ENCODE measurements at regions of chr5 and their contacts with region 1.

Region 1: GRCh38 chr5:162323471-162323870 is 255.9 kb downstream of the GABRG2 start:
- DNase-seq: peak; percentile 31
- H3K4me3 ChIP-seq: no peak overlapping the region
- H3K27ac ChIP-seq: no peak overlapping the region
- H3K4me1 ChIP-seq: peaks cover 0 to 4% (median 0%) of the 10 kb centered on the region in 4 donors
- H3K27me3 ChIP-seq: no peaks in the 10 kb centered on the region
- CTCF ChIP-seq: no peak
- EP300 ChIP-seq: no peak
- POLR2A ChIP-seq: no peak

Region 2: GRCh38 chr5:162301356-162301755 is 22.1 kb before region 1 on chr5:
- in situ Hi-C with region 1: no loop called
- intact Hi-C with region 1: loop called (anchors 2 kb)
- DNase-seq: no peak
- H3K4me3 ChIP-seq: no peak overlapping the region
- H3K27ac ChIP-seq: no peak overlapping the region
- H3K4me1 ChIP-seq: no peaks in the 10 kb centered on the region
- H3K27me3 ChIP-seq: no peaks in the 10 kb centered on the region
- CTCF ChIP-seq: no peak
- EP300 ChIP-seq: no peak
- POLR2A ChIP-seq: no peak

Region 3: GRCh38 chr5:162360373-162360931 is 37.0 kb after region 1 on chr5:
- in situ Hi-C with region 1: no loop called
- intact Hi-C with region 1: no loop called
- DNase-seq: no peak
- H3K4me3 ChIP-seq: no peak overlapping the region
- H3K27ac ChIP-seq: no peak overlapping the region
- H3K4me1 ChIP-seq: no peaks in the 10 kb centered on the region
- H3K27me3 ChIP-seq: no peaks in the 10 kb centered on the region
- CTCF ChIP-seq: no peak
- EP300 ChIP-seq: no peak
- POLR2A ChIP-seq: no peak